ENCODE measurements at regions of chr3 and their contacts with region 1.

Region 1: DNA sequence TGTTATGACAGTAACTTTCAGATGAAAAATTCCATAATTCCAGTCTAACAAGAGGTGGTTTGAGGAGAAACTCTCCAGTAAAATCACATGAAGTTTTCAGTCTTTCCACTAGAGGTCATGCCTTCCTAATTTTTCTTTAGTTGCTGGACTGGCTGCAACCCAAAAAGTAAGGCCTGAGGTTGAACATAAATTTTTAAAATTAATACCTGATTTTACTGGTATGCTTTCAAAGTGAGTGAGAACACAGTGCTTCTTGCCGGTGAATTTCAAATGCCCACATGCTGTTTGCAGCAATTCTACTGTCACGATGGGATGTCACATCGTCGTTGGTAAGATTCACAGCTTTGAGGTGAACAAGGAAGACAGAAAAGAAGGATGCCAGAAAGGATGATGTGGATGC is 89.0 kb upstream of the FGF12 start:
- DNase-seq: no peak
- ATAC-seq: peak in 1 of 2 donors; percentile 45
- H3K4me3 ChIP-seq: no peak overlapping the region
- H3K27ac ChIP-seq: no peak overlapping the region
- H3K4me1 ChIP-seq: peaks cover 4 to 16% of the 10 kb centered on the region in 2 donors
- H3K27me3 ChIP-seq: no peaks in the 10 kb centered on the region
- CTCF ChIP-seq: peak; percentile 58 to 76 (median 73)
- POLR2A ChIP-seq: no peak

Region 2: GRCh38 chr3:192629429-192629828 is 186.9 kb before region 1 on chr3:
- in situ Hi-C with region 1: no loop called
- intact Hi-C with region 1: no loop called
- DNase-seq: no peak
- ATAC-seq: no peak
- H3K4me3 ChIP-seq: no peak overlapping the region
- H3K27ac ChIP-seq: no peak overlapping the region
- H3K4me1 ChIP-seq: no peaks in the 10 kb centered on the region
- H3K27me3 ChIP-seq: no peaks in the 10 kb centered on the region
- CTCF ChIP-seq: no peak
- POLR2A ChIP-seq: no peak

Region 3: DNA sequence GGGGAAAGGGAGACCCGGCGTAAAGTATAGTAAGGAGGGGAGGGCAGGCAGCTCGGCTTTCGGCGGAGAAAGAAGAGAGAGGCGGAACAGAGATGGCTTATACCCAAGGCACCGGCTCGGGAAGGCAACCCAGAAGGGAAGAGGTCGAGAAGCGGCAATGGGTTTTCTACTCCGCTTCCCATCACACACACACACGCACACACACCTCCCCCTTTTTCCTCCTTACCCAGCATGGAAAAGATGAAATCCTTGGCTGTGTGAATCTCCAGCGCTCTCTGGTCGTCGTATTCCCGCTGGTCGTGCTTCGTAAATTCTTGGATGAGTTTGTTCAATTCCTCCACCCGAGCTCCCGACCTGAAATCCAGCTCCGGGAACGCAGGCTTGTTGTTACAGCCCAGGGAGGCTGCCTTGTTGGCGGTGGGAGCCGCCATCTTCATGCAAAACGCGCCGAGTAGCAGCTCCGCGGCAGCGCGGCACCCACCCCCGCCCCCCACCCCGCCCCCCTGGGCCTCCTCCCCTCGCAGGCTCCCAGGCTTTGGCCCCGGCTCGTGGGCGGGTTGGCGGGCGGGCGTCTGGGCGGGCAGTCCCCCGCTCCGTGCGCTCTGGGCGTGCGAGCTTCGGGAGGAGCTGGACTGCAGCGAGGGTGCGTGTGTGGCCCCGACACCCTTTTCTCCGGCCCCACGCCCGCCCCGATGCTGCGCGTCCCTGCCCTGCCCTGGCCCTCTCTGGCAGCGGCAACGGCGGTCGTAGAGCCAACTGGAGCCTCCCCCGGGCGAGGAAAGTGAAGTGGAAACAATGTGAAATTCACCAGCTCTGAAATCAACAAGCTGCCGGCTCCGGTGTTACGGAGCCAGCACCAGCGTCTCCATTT is 101.3 kb after region 1 on chr3 and contains the start of gene MB21D2:
- in situ Hi-C with region 1: loop called in 1 of 4 experiments (anchors 10 kb)
- intact Hi-C with region 1: loop called (anchors 2 kb)
- DNase-seq: peak; percentile 34 to 45
- ATAC-seq: peak; percentile 75 to 80
- H3K4me3 ChIP-seq: peak within 1 kb of the TSS; percentile 74 to 92 (median 82)
- H3K27ac ChIP-seq: peak within 1 kb of the TSS; percentile 88 to 94 (median 90)
- H3K4me1 ChIP-seq: peaks cover 11 to 24% of the 10 kb centered on the region in 2 donors
- H3K27me3 ChIP-seq: no peaks in the 10 kb centered on the region
- CTCF ChIP-seq: no peak
- POLR2A ChIP-seq: peak; percentile 38 to 59
- total RNA-seq, gene MB21D2: 1.5 to 3.8 (median 2.7) TPM

Region 4: GRCh38 chr3:193040836-193041672 is 224.7 kb after region 1 on chr3:
- in situ Hi-C with region 1: loop called (anchors 5 kb)
- intact Hi-C with region 1: loop called (anchors 1 kb)
- DNase-seq: no peak
- ATAC-seq: no peak
- H3K4me3 ChIP-seq: no peak overlapping the region
- H3K27ac ChIP-seq: no peak overlapping the region
- H3K4me1 ChIP-seq: no peaks in the 10 kb centered on the region
- H3K27me3 ChIP-seq: no peaks in the 10 kb centered on the region
- CTCF ChIP-seq: peak; percentile 33 to 66 (median 55)
- POLR2A ChIP-seq: no peak